ENCODE measurements at regions of chr10 and their contacts with region 1.

Region 1: DNA sequence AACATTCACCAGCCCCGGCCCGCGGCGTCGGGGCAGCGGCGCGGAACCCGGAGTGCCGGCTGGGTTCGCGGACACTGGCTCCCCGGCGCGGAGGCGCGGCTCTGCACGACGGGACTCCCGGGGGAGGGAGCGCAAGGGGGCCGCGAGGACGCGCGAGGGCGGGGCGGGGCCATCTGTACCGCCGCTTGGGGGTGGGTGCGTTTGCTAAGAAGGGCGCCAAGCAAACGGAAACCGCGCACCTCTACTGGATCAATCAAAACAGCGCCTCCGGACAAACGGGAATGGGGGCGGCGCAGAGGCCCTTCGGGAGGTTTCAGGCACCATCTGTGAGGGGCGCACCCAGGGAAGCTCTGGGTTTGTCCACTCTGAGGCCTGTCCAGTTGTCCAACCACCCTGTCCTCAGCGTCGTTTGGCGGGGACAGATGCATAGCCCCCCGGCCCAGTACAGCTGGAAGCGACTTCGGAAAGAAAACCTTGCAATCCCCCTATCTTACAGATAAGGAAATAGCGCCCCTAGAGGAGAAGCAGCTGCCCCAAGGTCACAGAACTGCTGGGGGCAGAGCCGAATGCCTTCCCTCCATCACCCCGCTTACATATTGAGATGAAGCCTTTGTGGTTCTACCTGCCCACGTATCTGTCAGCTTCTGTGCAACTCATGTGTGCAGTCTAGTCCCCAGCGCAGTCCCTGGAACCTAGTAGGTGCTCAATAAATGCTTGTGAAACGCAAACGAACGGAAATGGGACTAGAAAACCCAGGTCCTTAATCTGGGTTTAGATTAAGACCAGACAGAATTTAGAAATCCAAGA is 10.7 kb upstream of the SLIT1 start:
- DNase-seq: peak; percentile 62 to 73 (median 66)
- H3K4me3 ChIP-seq: peak overlapping the region; percentile 52 to 64
- H3K4me3 Mint-ChIP-seq: peak overlapping the region; percentile 83 to 91 (median 86)
- H3K27ac ChIP-seq: no peak overlapping the region
- H3K27ac Mint-ChIP-seq: peak overlapping the region in 4 of 7 donors; percentile 25 to 70 (median 36)
- H3K4me1 ChIP-seq: peaks cover 6% of the 10 kb centered on the region
- H3K4me1 Mint-ChIP-seq: peaks cover 6 to 11% (median 7%) of the 10 kb centered on the region in 4 donors
- H3K27me3 ChIP-seq: no peaks in the 10 kb centered on the region
- H3K27me3 Mint-ChIP-seq: peaks cover 8 to 10% of the 10 kb centered on the region in 2 donors

Region 2: GRCh38 chr10:97157578-97158095 is 38.8 kb before region 1 on chr10:
- CTCF ChIA-PET with region 1: interaction called, 12 read pairs
- POLR2A ChIA-PET with region 1: no interaction called
- intact Hi-C with region 1: no loop called
- DNase-seq: no peak
- H3K4me3 ChIP-seq: no peak overlapping the region
- H3K4me3 Mint-ChIP-seq: no peak overlapping the region
- H3K27ac ChIP-seq: no peak overlapping the region
- H3K27ac Mint-ChIP-seq: no peak overlapping the region
- H3K4me1 ChIP-seq: no peaks in the 10 kb centered on the region
- H3K4me1 Mint-ChIP-seq: no peaks in the 10 kb centered on the region
- H3K27me3 ChIP-seq: no peaks in the 10 kb centered on the region
- H3K27me3 Mint-ChIP-seq: no peaks in the 10 kb centered on the region

Region 3: GRCh38 chr10:97182288-97182990 is 14.0 kb before region 1 on chr10:
- CTCF ChIA-PET with region 1: interaction called, 10 read pairs
- POLR2A ChIA-PET with region 1: no interaction called
- intact Hi-C with region 1: no loop called
- DNase-seq: no peak
- H3K4me3 ChIP-seq: no peak overlapping the region
- H3K4me3 Mint-ChIP-seq: no peak overlapping the region
- H3K27ac ChIP-seq: no peak overlapping the region
- H3K27ac Mint-ChIP-seq: no peak overlapping the region
- H3K4me1 ChIP-seq: no peaks in the 10 kb centered on the region
- H3K4me1 Mint-ChIP-seq: peaks cover 6 to 16% (median 8%) of the 10 kb centered on the region in 4 donors
- H3K27me3 ChIP-seq: peaks cover 5% of the 10 kb centered on the region
- H3K27me3 Mint-ChIP-seq: peaks cover 43 to 58% of the 10 kb centered on the region in 2 donors

Region 4: GRCh38 chr10:97463363-97464132 is 267.1 kb after region 1 on chr10:
- CTCF ChIA-PET with region 1: no interaction called
- POLR2A ChIA-PET with region 1: no interaction called
- intact Hi-C with region 1: no loop called
- DNase-seq: peak; percentile 31 to 52 (median 42)
- H3K4me3 ChIP-seq: no peak overlapping the region
- H3K4me3 Mint-ChIP-seq: no peak overlapping the region
- H3K27ac ChIP-seq: no peak overlapping the region
- H3K27ac Mint-ChIP-seq: peak overlapping the region; percentile 12 to 77 (median 37)
- H3K4me1 ChIP-seq: no peaks in the 10 kb centered on the region
- H3K4me1 Mint-ChIP-seq: peaks cover 0 to 2% (median 0%) of the 10 kb centered on the region in 4 donors
- H3K27me3 ChIP-seq: no peaks in the 10 kb centered on the region
- H3K27me3 Mint-ChIP-seq: no peaks in the 10 kb centered on the region